Endothelial cell of umbilical vein (primary cell): ENCODE measurements at regions of chr15 and their contacts with region 1.

Region 1: GRCh38 chr15:74768771-74769342 is 13.0 kb upstream of the CSK start:
- DNase-seq: peak; percentile 58
- H3K4me3 ChIP-seq: no peak overlapping the region
- H3K27ac ChIP-seq: no peak overlapping the region
- H3K4me1 ChIP-seq: peaks cover 2% of the 10 kb centered on the region
- H3K27me3 ChIP-seq: peaks cover 0 to 2% of the 10 kb centered on the region in 2 experiments
- CTCF ChIP-seq: peak; percentile 71 to 72
- POLR2A ChIP-seq: no peak

Region 2: DNA sequence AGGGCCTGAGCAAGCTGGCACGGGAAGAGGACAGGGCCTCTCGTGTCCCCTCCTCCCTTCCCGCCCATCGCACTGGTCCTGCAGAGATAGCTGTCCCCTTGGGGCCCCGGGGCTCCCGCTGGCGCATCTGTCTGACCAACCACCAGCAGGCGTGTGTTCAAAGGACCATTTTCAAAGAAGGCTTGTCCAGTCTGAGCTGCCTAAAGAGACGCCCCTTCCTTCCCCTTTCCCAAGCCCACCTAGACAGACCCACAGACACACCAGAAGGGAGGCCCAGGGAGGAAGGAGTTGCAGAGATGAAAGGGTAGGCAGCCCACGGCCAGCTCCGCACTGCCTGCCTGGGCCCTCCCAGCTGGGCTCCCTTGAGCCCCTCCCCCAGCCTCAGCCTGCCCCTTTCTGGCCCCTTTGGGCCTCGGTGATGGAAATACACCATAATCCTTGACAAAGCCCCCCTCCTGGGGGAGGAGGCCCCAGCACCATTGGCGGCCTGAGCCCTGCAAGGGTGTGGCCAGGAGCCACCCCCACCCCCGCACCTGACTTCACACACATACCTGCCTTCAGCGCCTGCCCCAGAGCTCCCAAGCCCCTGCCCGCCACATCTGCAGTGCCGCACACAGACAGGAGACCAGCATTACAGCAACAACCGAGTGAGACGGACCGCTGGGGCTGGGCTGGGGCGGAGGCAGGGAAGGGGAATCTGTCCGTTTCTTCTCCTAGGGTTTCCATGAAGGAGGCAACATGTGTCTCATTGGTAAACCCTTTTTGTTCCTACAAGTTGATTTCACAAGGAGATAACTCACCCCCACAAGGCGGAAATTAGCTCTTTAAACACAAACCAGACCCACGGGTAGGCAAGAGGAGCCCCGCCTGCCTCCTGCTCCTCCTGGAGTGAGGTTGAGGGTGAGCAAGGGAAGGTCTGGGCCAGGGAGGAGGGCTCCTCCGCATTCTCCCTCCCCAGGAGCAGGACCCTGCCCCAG is 566.1 kb before region 1 on chr15 and contains the start of gene STRA6:
- CTCF ChIA-PET with region 1: no interaction called
- POLR2A ChIA-PET with region 1: no interaction called
- dilution Hi-C with region 1: no loop called
- intact Hi-C with region 1: no loop called
- DNase-seq: no peak
- H3K4me3 ChIP-seq: no peak within 1 kb of the TSS
- H3K27ac ChIP-seq: no peak within 1 kb of the TSS
- H3K4me1 ChIP-seq: peaks cover 3% of the 10 kb centered on the region
- H3K27me3 ChIP-seq: peaks cover 0 to 3% of the 10 kb centered on the region in 2 experiments
- CTCF ChIP-seq: no peak
- POLR2A ChIP-seq: no peak
- total RNA-seq, gene STRA6: not detected in 2 replicates

Region 3: DNA sequence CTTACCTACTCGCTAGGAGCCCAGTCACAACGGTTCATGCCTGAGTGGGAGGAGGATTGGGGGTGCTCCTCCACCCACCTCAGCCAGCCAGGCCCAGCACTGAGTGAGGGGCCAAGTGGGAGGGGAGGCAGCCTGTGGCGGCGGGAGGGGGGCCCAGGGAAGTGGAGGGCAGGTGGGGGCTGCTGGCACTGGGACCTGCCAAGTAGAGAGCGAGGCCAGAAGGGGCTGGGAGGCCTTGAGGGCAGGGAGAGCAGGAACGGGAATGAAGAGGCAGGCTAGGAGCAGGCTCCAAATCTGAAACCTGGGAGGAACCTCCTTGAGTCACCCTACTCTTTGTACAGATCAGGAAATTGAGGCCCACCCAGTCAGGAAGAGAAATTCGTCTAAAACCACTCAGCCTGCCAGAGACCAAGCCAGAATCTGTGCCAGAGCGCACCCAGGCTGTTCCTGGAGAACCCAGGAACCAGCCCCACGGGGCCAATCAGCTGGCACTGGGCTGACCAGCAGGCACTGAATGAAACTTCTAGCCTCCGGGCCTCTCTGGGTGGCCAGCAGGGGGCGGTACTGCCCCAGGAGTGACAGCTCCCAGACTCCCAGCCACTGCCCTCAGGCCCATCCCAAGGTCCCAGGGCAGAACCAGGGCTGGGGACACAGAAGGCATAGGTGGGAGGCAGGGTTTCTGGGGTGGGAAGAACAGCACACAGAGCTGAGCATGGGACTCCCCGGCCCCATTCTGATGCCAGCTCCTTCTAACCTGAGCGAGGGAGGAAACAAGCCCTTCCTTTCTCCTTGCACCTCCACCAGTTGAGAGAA is 386.6 kb before region 1 on chr15:
- CTCF ChIA-PET with region 1: interaction called, 10 read pairs
- POLR2A ChIA-PET with region 1: no interaction called
- dilution Hi-C with region 1: no loop called
- intact Hi-C with region 1: no loop called
- DNase-seq: peak; percentile 69
- H3K4me3 ChIP-seq: no peak overlapping the region
- H3K27ac ChIP-seq: no peak overlapping the region
- H3K4me1 ChIP-seq: peaks cover 28% of the 10 kb centered on the region
- H3K27me3 ChIP-seq: no peaks in the 10 kb centered on the region
- CTCF ChIP-seq: peak; percentile 97 to 99
- POLR2A ChIP-seq: no peak

Region 4: GRCh38 chr15:74584779-74585178 is 184.1 kb before region 1 on chr15:
- CTCF ChIA-PET with region 1: no interaction called
- POLR2A ChIA-PET with region 1: no interaction called
- dilution Hi-C with region 1: no loop called
- intact Hi-C with region 1: no loop called
- DNase-seq: no peak
- H3K4me3 ChIP-seq: no peak overlapping the region
- H3K27ac ChIP-seq: no peak overlapping the region
- H3K4me1 ChIP-seq: peaks cover 19% of the 10 kb centered on the region
- H3K27me3 ChIP-seq: no peaks in the 10 kb centered on the region
- CTCF ChIP-seq: no peak
- POLR2A ChIP-seq: no peak

Region 5: DNA sequence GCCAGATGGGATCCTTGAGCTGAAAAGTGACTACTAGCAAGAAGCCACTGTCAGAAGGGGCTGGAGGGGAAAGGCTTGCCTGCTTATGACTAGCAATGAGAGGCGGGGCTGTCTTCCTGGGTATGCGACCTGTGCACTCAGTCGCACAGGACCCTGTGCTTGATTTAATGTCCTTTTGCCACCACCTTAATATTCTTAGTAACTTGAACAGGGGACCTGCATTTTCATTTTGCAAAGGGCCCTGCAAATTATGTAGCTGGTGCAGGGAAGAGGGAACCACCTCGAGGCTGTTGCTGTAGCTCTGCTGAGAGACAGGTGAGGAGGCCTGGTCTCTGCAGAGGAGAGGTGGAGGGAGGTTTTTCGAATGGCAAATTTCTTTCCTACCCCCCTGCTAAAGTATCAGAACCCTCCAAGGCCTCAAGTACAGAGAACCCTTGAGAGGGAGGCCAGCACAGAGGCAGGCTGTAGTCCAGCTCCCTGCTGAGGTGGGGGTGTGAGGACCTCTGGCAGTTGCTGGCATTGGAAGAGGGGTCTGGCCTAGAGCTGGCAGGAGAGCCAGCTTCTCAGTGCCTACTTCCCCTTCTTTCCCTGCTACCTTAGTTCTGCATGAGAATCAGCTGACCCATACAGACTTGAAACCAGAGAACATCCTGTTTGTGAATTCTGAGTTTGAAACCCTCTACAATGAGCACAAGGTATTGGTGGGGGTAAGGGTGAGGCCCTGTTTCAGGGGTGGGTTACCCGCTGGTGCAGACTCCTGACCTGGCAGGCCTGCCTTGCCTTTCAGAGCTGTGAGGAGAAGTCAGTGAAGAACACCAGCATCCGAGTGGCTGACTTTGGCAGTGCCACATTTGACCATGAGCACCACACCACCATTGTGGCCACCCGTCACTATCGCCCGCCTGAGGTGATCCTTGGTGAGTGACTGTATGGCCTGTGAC is 141.8 kb before region 1 on chr15:
- CTCF ChIA-PET with region 1: interaction called, 696 read pairs
- POLR2A ChIA-PET with region 1: no interaction called
- dilution Hi-C with region 1: loop called (anchors 25 kb)
- intact Hi-C with region 1: no loop called
- DNase-seq: no peak
- H3K4me3 ChIP-seq: no peak overlapping the region
- H3K27ac ChIP-seq: no peak overlapping the region
- H3K4me1 ChIP-seq: no peaks in the 10 kb centered on the region
- H3K27me3 ChIP-seq: no peaks in the 10 kb centered on the region
- CTCF ChIP-seq: no peak
- POLR2A ChIP-seq: no peak

Region 6: DNA sequence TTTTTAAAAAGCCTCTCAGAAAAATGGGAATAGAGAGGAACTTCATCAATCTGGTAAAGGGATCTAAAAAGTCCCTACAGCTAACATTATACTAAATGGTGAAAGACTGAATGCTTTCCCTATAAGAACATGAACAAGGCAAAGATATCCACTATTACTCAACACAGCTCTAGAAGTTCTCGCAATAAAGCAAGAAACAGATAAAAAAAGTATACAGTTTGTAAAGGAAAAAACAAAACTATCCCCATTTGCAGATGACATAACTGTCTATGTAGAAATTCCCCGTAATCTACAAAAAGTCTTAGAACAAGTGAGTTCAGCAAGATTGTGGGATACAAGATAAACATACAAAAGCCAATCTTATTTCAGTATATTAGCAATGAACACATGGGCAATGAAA is 88.4 kb before region 1 on chr15:
- CTCF ChIA-PET with region 1: no interaction called
- POLR2A ChIA-PET with region 1: no interaction called
- dilution Hi-C with region 1: no loop called
- intact Hi-C with region 1: no loop called
- DNase-seq: no peak
- H3K4me3 ChIP-seq: no peak overlapping the region
- H3K27ac ChIP-seq: no peak overlapping the region
- H3K4me1 ChIP-seq: no peaks in the 10 kb centered on the region
- H3K27me3 ChIP-seq: no peaks in the 10 kb centered on the region
- CTCF ChIP-seq: no peak
- POLR2A ChIP-seq: no peak

Region 7: DNA sequence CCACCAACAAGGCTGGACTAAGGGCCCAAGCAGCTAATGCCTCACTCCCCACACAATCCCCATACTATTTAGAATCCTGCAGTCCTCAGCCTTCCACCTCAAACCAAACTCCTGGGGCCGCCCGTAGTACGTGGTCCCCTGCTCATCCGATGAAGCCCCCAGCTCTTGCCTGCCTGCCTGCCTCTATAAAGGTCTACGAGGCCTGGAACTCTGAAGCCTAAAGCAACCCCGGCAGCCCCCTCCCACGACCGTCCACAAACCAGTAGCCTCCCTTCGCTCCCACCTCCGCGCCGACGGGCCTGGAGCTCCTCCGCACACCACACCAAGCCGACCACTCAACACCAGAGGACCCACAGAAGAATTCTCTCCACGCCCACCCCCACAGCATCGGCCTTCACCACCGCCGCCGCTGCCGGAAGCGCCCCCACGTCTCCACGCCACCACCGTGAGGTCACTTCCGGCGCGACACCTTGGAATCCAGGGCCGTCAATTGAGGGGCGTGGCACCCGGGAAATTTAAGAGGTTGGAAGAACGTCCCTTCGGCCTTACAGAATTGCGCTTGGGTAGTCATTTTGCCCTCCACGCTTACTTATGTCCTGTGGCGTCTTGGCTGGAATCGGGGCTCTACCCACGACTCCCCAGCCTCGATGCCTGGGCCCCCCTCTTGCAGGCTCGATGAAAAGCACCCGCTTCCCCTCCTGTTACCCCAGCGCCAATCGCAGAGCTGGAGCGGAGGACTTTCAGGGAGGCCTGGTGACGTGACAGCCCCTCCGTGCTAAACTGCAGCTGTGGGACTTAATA is 73.1 kb before region 1 on chr15 and contains the start of gene EDC3:
- CTCF ChIA-PET with region 1: interaction called, 4 read pairs
- POLR2A ChIA-PET with region 1: interaction called, 3 read pairs
- dilution Hi-C with region 1: no loop called
- intact Hi-C with region 1: loop called (anchors 2 kb)
- DNase-seq: peak; percentile 84
- H3K4me3 ChIP-seq: peak within 1 kb of the TSS; percentile 69 to 80 (median 76)
- H3K27ac ChIP-seq: peak within 1 kb of the TSS; percentile 77
- H3K4me1 ChIP-seq: peaks cover 15% of the 10 kb centered on the region
- H3K27me3 ChIP-seq: no peaks in the 10 kb centered on the region
- CTCF ChIP-seq: no peak
- POLR2A ChIP-seq: peak; percentile 61
- total RNA-seq, gene EDC3: 52.7 and 56.5 TPM in 2 replicates

Region 8: DNA sequence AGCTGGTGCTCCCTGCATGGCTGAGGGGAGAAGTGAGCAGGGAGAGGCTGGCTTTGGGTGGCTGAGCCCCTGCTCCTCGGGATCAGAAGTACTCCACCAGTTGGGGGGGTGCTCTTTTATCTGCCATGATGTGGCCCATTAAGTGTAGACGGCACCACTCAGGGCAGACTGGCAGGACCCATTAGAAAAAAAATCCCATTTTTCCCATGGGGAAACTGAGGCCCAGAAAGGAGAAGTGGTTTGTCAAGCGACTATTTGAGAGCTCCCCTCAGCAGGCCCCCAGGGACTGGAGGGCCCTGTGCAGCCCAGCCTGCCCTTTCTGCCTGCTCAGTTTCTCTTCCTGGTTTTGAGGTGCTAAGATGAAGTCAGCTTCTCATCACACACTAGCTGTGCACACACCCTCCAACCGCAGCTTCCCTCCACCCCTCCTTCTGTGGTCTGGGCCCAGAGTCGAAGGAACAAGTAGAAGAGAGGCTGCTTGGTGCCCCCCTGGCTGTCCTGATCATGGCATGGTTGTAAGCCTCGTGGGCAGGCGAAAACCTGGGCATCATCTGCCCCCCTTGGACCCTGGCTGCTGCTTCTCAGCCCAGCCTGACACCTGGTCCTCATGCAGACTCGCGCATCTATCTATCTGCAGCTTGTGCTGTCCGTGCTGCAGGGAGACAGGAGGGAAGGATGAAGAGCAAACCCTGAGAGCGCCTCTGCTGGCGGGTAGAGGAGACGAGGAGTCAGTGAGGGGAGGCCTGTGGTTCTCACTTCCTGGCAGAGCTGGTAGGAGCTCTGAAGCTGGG is 18.6 kb after region 1 on chr15:
- CTCF ChIA-PET with region 1: interaction called, 98 read pairs
- POLR2A ChIA-PET with region 1: no interaction called
- dilution Hi-C with region 1: no loop called
- intact Hi-C with region 1: no loop called
- DNase-seq: no peak
- H3K4me3 ChIP-seq: no peak overlapping the region
- H3K27ac ChIP-seq: no peak overlapping the region
- H3K4me1 ChIP-seq: peaks cover 18% of the 10 kb centered on the region
- H3K27me3 ChIP-seq: no peaks in the 10 kb centered on the region
- CTCF ChIP-seq: peak; percentile 46 to 54
- POLR2A ChIP-seq: no peak

Region 9: DNA sequence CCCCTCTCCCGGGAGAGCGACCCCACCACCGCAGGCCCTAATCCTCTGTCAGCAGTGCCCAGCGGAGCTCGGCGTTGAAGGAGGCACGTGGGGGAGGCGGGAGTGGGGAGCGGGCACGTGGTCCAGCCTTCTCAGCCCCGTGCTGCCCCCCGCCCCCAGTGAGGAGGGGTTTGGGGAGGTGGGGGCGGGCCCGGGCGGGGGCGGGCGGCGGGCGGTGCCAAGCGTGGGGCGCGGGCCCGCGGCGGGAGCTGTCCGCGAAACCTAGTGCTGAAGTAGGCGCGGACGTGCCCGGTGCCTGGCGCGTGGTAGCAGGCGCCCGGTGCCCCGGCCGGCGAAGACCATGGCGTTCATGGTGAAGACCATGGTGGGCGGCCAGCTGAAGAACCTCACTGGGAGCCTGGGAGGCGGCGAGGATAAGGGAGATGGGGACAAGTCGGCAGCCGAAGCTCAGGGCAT is 57.5 kb after region 1 on chr15 and contains the start of gene CPLX3:
- CTCF ChIA-PET with region 1: interaction called, 14 read pairs
- POLR2A ChIA-PET with region 1: no interaction called
- dilution Hi-C with region 1: no loop called
- intact Hi-C with region 1: no loop called
- DNase-seq: no peak
- H3K4me3 ChIP-seq: no peak within 1 kb of the TSS
- H3K27ac ChIP-seq: no peak within 1 kb of the TSS
- H3K4me1 ChIP-seq: no peaks in the 10 kb centered on the region
- H3K27me3 ChIP-seq: peaks cover 14 to 17% of the 10 kb centered on the region in 2 experiments
- CTCF ChIP-seq: no peak
- POLR2A ChIP-seq: no peak
- total RNA-seq, gene CPLX3: 0.16 TPM in 1 of 2 replicates, not detected in the other

Region 10: DNA sequence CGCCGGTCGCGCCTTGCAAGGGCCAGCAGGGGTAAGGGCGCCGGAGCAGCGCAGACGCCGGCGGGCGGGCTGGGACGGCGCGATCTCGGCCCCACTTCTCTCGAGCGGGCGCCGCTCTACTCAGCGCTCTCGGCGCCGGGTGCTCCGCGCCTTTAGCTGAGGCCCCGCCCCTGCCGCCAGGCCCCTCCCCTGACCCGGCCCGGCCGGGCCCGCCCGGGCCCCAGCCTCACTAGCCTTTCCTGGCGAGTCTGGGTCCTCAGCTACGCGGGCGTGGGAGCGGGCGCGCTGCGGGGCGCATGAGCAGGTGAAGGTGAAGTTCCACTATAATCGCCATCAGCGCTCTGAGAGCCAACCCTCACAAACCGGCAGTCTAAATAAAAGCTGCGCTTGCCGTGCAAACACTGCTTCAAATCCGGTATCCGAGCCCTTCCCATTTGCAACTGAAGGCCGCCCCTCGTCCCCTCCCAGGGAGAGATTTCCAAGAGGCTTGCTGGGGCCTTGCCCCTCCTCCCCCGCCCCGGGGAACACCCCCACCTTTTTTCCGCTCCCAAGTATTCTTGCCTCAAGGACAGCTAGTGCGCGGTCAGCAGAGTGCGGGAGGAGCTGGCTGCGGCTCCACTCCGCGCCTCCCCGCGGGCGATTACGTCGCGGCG is 187.9 kb after region 1 on chr15 and contains the start of gene RPP25:
- CTCF ChIA-PET with region 1: interaction called, 210 read pairs
- POLR2A ChIA-PET with region 1: no interaction called
- dilution Hi-C with region 1: no loop called
- intact Hi-C with region 1: no loop called
- DNase-seq: peak; percentile 76
- H3K4me3 ChIP-seq: peak within 1 kb of the TSS; percentile 44 to 56 (median 53)
- H3K27ac ChIP-seq: peak within 1 kb of the TSS; percentile 46
- H3K4me1 ChIP-seq: peaks cover 58% of the 10 kb centered on the region
- H3K27me3 ChIP-seq: peaks cover 0 to 3% of the 10 kb centered on the region in 2 experiments
- CTCF ChIP-seq: no peak
- POLR2A ChIP-seq: peak; percentile 80
- total RNA-seq, gene RPP25: 13.7 and 13.8 TPM in 2 replicates